OCI-LY7 (cell line): ENCODE measurements at regions of chr10 and their contacts with region 1.

Region 1: GRCh38 chr10:35218339-35218955 is 91.8 kb downstream of the CREM start:
- DNase-seq: peak; percentile 90
- H3K4me3 ChIP-seq: no peak overlapping the region
- H3K27ac ChIP-seq: no peak overlapping the region
- H3K4me1 ChIP-seq: peaks cover 22% of the 10 kb centered on the region
- CTCF ChIP-seq: peak; percentile 95

Region 2: DNA sequence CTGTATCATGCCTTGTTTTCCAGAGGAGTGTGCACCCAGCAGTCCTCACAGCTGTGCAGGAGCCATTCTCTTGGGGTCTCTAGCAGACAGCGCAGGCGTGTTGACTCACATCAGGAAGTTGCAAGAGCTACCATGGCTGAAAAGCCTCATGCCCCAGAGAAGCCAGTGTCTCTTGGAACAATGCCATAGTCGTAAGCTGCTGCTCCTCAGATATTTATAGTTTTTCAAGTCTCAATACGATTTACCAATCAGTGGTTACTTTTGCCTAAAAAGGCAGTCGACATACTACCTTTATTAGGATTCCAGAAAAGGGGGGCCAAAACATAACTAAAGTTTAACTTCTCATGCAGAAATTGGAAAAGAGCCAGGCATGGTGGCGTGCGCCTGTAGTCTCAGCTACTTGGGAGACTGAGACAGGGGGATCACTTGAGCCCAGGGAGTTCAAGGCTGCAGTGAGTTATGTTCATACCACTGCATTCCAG is 811.1 kb before region 1 on chr10:
- CTCF ChIA-PET with region 1: no interaction called
- POLR2A ChIA-PET with region 1: no interaction called
- intact Hi-C with region 1: no loop called
- DNase-seq: no peak
- H3K4me3 ChIP-seq: no peak overlapping the region
- H3K27ac ChIP-seq: no peak overlapping the region
- H3K4me1 ChIP-seq: no peaks in the 10 kb centered on the region
- CTCF ChIP-seq: no peak

Region 3: DNA sequence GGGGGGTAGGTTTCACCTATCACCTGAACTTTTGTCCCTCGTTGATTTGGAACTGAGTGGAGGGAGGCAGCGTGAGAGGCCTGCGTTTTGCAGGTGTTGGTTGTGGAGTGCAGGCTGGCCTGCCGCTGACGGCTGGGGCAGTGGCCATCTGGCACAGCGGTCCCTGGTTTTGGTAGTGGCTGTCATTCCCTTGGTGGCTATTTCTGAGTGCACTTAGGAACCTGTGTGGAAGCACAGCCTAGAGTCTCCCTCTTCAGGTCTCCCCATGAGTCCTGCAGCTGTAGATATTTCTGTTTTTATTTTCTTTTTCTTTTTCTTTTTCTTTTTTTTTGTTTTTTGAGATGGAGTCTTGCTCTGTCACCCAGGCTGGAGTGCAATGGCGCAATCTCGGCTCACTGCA is 257.5 kb before region 1 on chr10:
- CTCF ChIA-PET with region 1: no interaction called
- POLR2A ChIA-PET with region 1: no interaction called
- intact Hi-C with region 1: no loop called
- DNase-seq: no peak
- H3K4me3 ChIP-seq: no peak overlapping the region
- H3K27ac ChIP-seq: no peak overlapping the region
- H3K4me1 ChIP-seq: no peaks in the 10 kb centered on the region
- CTCF ChIP-seq: no peak

Region 4: DNA sequence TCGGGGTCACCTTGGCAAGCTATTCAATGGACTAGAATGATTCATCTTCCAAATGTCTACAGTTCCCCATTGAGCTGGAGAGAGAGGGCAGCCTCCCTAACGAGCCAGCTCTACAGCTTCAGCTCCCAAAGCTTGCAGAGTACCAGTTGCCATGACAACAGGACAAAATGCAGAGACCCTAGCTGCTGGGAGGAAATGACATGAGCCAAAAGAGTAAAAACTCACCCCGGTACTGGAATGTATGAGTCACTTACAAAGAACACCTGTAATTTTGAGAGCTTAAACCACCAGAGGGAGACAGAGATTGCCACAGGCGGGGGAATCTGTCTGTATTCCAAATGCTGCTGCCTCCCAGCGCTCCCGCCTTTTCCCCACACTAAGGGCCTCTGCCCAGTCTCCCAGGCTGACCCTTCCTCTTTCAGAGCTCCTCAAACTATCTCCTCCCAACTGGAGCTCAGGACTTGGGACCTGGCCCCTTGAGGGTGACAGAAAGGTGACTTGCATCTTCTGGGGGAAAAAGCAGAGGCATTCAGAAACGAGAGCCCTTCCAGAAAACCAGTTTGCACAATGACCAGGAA is 223.8 kb before region 1 on chr10:
- CTCF ChIA-PET with region 1: no interaction called
- POLR2A ChIA-PET with region 1: no interaction called
- intact Hi-C with region 1: loop called (anchors 2 kb)
- DNase-seq: peak; percentile 69
- H3K4me3 ChIP-seq: no peak overlapping the region
- H3K27ac ChIP-seq: no peak overlapping the region
- H3K4me1 ChIP-seq: no peaks in the 10 kb centered on the region
- CTCF ChIP-seq: peak; percentile 83

Region 5: GRCh38 chr10:35119378-35119777 is 99.1 kb before region 1 on chr10:
- CTCF ChIA-PET with region 1: interaction called, 10 read pairs
- POLR2A ChIA-PET with region 1: interaction called, 17 read pairs
- intact Hi-C with region 1: loop called (anchors 1 kb)
- DNase-seq: no peak
- H3K4me3 ChIP-seq: no peak overlapping the region
- H3K27ac ChIP-seq: no peak overlapping the region
- H3K4me1 ChIP-seq: no peaks in the 10 kb centered on the region
- CTCF ChIP-seq: no peak

Region 6: GRCh38 chr10:35126530-35127296 is 91.7 kb before region 1 on chr10 and contains the start of gene CREM:
- CTCF ChIA-PET with region 1: interaction called, 10 read pairs
- POLR2A ChIA-PET with region 1: interaction called, 17 read pairs
- intact Hi-C with region 1: loop called (anchors 1 kb)
- DNase-seq: peak; percentile 98
- H3K4me3 ChIP-seq: peak within 1 kb of the TSS; percentile 93
- H3K27ac ChIP-seq: peak within 1 kb of the TSS; percentile 85
- H3K4me1 ChIP-seq: peaks cover 43% of the 10 kb centered on the region
- CTCF ChIP-seq: peak; percentile 82
- total RNA-seq, gene CREM: 31.9 and 38.1 TPM in 2 replicates

Region 7: DNA sequence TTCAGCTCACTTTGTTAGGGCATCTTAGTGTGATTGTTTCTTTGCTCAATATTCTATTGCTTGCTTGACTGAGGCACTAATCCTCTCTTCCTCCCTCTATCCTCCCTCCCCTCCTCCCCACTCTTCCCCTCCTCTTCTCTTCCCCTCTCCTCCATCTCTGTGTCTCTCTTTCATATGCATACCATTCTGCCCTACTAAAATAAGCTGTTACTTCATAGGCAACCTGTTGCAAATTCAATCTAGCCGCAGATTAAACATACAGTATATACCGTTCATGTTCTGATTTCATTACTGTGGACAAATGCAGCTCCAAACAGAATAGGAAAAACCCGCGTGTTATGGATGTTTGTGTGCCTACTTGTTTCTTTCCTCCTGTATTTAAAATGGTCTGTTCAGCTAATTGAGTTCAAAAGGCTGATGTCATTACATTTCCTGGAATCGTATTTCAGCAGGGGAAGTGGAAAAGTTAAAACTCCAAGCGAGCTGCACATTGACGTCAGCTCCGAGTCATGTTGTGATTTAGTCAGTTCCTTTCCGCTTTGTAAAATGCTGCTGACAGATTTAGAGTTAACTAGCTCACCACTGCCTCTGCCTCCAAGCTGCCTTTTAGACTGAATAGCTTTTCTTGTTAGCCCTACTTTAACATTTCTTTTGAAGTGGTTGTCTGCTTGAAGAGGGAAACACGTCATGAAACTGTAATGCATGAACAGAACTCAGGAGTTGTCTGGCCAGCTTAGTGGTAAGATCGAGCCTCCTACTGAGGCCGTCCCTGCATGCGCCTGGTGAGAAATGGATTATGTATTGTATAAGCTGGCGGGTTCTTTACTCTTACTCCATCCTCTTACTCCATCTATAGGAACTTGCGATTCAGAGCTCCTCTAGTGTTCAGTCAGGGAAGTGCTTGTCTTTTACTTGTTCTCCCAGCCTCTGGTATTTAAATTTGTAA is 22.8 kb before region 1 on chr10:
- CTCF ChIA-PET with region 1: interaction called, 5 read pairs
- POLR2A ChIA-PET with region 1: interaction called, 20 read pairs
- intact Hi-C with region 1: no loop called
- DNase-seq: peak; percentile 91
- H3K4me3 ChIP-seq: peak overlapping the region; percentile 67
- H3K27ac ChIP-seq: peak overlapping the region; percentile 88
- H3K4me1 ChIP-seq: peaks cover 24% of the 10 kb centered on the region
- CTCF ChIP-seq: peak; percentile 91

Region 8: DNA sequence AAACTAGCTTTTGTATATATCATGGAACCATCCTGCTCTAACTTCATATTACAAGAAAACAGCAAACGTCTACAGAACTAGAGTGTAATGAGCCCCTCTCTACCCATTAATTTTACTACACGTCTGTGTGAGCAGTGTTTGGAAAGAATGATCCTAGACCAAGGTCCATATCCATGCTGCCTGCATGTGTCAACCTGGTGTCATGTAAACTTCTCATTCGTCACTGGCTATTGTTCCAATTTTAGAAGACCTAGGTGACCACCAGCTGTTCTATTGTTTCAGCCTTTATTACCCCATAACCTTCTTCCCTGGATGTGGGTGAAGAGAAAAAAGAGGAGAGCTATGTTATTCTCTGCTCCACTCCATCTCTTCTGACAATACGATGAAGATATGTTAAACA is 14.7 kb before region 1 on chr10:
- CTCF ChIA-PET with region 1: no interaction called
- POLR2A ChIA-PET with region 1: interaction called, 21 read pairs
- intact Hi-C with region 1: no loop called
- DNase-seq: no peak
- H3K4me3 ChIP-seq: no peak overlapping the region
- H3K27ac ChIP-seq: no peak overlapping the region
- H3K4me1 ChIP-seq: peaks cover 14% of the 10 kb centered on the region
- CTCF ChIP-seq: no peak